ENCODE measurements at regions of chr6 and their contacts with region 1.

Region 1: GRCh38 chr6:34248727-34249551 is at the start of gene SMIM29:
- DNase-seq: peak; percentile 98
- H3K4me3 Mint-ChIP-seq: peak within 1 kb of the TSS; percentile 92
- H3K27ac Mint-ChIP-seq: peak within 1 kb of the TSS; percentile 86
- H3K4me1 Mint-ChIP-seq: peaks cover 50% of the 10 kb centered on the region
- H3K27me3 Mint-ChIP-seq: no peaks in the 10 kb centered on the region
- total RNA-seq, gene SMIM29: 22.4 to 25.2 TPM

Region 2: DNA sequence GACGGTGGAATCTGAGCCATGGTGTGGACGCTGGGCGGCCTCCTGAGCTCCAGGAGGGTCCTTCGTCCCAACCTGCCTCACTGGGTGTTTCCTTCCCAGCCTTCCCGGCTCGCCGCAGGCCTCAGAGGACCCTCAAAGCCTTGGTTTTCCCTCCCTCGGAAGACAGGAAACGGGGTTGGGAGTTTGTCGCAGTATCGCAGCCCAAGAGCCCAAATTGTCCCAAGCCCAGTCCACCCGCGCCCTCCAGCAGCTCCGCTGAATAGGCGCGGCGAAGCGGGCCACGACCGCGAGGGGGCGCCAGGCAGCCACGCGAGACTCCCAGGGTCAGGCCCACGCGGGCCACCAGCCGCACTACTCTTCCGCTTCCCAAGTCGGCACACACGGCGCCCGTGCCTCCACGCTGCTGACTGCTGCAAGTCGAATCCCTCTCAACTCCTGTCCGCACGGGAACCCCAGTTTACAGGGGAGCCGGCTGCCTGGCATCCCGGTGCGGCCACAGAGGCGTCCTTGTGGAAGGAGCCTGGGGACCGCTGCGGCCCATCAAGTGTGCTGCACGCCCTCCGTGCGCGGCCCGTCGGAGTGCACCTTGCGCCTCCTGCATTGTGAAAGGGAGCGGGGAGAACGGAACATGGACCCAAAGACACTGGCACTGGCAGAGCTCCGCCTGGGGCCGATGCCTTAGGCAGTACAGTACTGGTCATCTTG is 52.7 kb before region 1 on chr6:
- CTCF ChIA-PET with region 1: interaction called, 39 read pairs
- POLR2A ChIA-PET with region 1: interaction called, 3 read pairs
- intact Hi-C with region 1: loop called (anchors 2 kb)
- DNase-seq: peak; percentile 91
- H3K4me3 Mint-ChIP-seq: peak overlapping the region; percentile 72
- H3K27ac Mint-ChIP-seq: no peak overlapping the region
- H3K4me1 Mint-ChIP-seq: peaks cover 15% of the 10 kb centered on the region
- H3K27me3 Mint-ChIP-seq: no peaks in the 10 kb centered on the region

Region 3: GRCh38 chr6:34236131-34236996 is 12.6 kb before region 1 on chr6 and contains the start of gene HMGA1:
- CTCF ChIA-PET with region 1: interaction called, 13 read pairs
- POLR2A ChIA-PET with region 1: interaction called, 19 read pairs
- intact Hi-C with region 1: loop called (anchors 1 kb)
- DNase-seq: peak; percentile 91
- H3K4me3 Mint-ChIP-seq: peak within 1 kb of the TSS; percentile 88
- H3K27ac Mint-ChIP-seq: peak within 1 kb of the TSS; percentile 93
- H3K4me1 Mint-ChIP-seq: peaks cover 41% of the 10 kb centered on the region
- H3K27me3 Mint-ChIP-seq: no peaks in the 10 kb centered on the region
- total RNA-seq, gene HMGA1: 422 to 429 TPM

Region 4: GRCh38 chr6:34284563-34285447 is 35.9 kb after region 1 on chr6:
- CTCF ChIA-PET with region 1: no interaction called
- POLR2A ChIA-PET with region 1: no interaction called
- intact Hi-C with region 1: no loop called
- DNase-seq: no peak
- H3K4me3 Mint-ChIP-seq: no peak overlapping the region
- H3K27ac Mint-ChIP-seq: no peak overlapping the region
- H3K4me1 Mint-ChIP-seq: peaks cover 8% of the 10 kb centered on the region
- H3K27me3 Mint-ChIP-seq: no peaks in the 10 kb centered on the region

Region 5: DNA sequence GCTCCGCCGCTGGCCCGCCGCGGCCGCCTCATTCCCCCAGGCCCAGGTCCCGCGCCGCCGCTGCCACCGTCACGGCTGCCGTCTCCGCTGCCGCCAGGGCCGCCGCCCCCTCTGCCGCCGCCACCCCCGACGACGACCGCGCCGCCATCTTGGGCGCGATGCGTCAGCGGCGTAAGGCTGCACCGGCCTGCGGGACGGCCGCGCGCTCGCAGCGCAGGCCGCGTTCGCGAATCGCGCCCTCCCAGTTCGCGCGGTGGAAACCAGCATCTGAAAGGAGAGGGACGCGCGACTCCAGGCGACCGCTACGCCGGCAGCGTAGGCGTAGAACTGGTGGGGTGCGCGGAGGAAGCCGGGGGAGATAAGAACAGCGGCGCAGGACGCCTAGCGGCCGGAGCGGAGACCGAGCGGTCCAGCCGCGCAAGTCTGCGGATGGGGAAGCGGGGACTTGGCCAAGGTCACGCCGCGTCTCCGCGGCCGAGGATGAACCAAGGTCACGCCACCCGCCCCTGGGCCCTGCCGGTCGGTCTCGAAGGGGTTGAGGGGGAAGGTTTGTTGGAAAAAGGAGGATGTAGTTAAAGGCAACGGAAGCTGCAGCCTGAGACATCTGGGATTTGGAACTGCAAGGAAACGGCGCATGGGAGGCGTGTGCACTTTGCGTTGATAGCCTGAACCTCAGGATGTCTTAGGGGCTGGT is 143.7 kb after region 1 on chr6 and contains the start of gene NUDT3:
- CTCF ChIA-PET with region 1: interaction called, 28 read pairs
- POLR2A ChIA-PET with region 1: no interaction called
- intact Hi-C with region 1: loop called (anchors 1 kb)
- DNase-seq: peak; percentile 96
- H3K4me3 Mint-ChIP-seq: peak within 1 kb of the TSS; percentile 57
- H3K27ac Mint-ChIP-seq: peak within 1 kb of the TSS; percentile 87
- H3K4me1 Mint-ChIP-seq: peaks cover 21% of the 10 kb centered on the region
- H3K27me3 Mint-ChIP-seq: no peaks in the 10 kb centered on the region
- total RNA-seq, gene NUDT3: 12.7 to 13.4 TPM

Region 6: DNA sequence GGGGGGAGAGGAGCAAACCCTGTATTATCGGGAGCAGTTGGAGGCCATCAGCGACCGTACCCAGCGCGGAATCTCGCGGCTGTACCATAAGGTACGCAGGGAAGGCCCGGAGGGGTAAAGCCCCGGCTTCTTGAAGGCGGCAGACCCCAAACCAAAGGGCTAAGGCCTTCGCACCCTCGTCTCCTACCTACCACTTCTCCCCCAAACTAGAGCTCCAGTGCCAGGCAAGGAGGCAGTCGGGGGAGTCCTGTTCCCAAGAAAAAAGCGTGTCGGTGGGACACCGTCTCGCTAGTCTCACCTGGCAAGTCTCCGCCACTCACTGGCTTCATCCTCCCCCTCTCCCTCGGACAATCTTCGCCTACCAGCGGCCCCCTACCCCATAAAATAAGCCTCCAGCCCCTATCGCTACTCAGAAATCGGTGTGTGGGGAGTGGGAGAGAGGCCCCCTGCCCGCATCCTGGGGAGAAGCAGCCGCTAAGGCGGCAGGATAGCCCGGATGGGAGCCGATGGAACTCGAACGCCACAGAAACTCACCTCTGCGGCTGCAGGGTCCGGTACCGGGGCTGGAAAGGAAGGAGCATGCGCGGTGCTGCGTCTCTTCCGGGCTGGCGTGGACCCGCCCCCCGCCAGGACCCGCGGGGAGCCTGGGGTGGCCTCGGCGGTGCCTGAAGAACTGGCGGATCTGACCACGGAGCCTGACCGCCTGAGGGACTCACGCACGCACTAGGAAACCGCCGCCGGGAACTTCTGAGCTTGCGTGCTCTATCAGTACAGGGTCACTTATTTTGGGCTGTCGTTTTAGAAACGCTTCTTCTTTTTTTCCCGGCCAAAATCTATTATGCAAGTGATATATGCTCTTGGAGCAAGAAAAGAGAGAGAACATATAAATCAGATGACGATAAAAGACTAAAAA is 176.8 kb after region 1 on chr6 and contains the start of gene RPS10:
- CTCF ChIA-PET with region 1: interaction called, 7 read pairs
- POLR2A ChIA-PET with region 1: interaction called, 13 read pairs
- intact Hi-C with region 1: no loop called
- DNase-seq: peak; percentile 94
- H3K4me3 Mint-ChIP-seq: peak within 1 kb of the TSS; percentile 99
- H3K27ac Mint-ChIP-seq: peak within 1 kb of the TSS; percentile 99
- H3K4me1 Mint-ChIP-seq: peaks cover 40% of the 10 kb centered on the region
- H3K27me3 Mint-ChIP-seq: no peaks in the 10 kb centered on the region
- total RNA-seq, gene RPS10: 2,106 to 2,169 TPM

Region 7: DNA sequence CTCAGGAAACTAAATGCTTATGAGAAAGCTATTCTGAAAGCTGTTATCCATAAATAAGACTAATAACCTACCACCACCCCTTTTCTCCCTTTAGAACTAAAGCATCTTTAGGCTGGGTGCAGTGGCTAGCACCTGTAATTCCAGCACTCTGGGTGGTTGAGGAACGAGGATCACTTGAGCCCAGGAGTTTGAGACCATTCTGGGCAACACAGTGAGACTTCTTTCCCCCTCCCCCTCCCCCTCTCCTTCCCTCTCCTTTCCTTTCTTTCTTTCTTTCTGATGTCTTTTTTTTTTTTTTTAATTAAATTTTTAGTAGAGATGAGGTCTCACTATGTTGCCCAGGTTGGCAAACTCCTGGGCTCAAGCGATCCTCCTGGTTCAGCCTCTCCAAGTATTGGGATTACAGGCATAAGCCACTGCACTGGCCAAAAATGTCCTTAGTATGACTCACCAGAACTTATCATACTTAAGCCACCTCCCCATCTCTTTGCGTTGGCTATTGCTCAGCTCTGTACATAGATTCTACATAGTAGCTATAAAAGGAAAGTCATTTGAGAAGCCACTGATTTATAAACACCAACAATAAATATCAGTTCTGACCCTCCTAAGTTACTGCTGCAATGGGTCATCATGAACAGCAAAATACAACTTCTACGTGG is 362.0 kb after region 1 on chr6:
- CTCF ChIA-PET with region 1: interaction called, 22 read pairs
- POLR2A ChIA-PET with region 1: no interaction called
- intact Hi-C with region 1: loop called (anchors 1 kb)
- DNase-seq: no peak
- H3K4me3 Mint-ChIP-seq: no peak overlapping the region
- H3K27ac Mint-ChIP-seq: no peak overlapping the region
- H3K4me1 Mint-ChIP-seq: peaks cover 15% of the 10 kb centered on the region
- H3K27me3 Mint-ChIP-seq: no peaks in the 10 kb centered on the region